ENCODE measurements at regions of chr17 and their contacts with region 1.

Region 1: GRCh38 chr17:37220607-37220953 is 155.2 kb upstream of the C17orf78 start:
- DNase-seq: no peak
- H3K4me3 ChIP-seq: no peak overlapping the region
- H3K27ac ChIP-seq: no peak overlapping the region
- H3K4me1 ChIP-seq: no peaks in the 10 kb centered on the region
- H3K27me3 ChIP-seq: no peaks in the 10 kb centered on the region
- CTCF ChIP-seq: peak in 2 of 4 experiments; percentile 24 to 49
- POLR2A ChIP-seq: no peak

Region 2: GRCh38 chr17:36629252-36629847 is 591.2 kb before region 1 on chr17:
- intact Hi-C with region 1: loop called (anchors 10 kb)
- DNase-seq: peak; percentile 62
- H3K4me3 ChIP-seq: no peak overlapping the region
- H3K27ac ChIP-seq: no peak overlapping the region
- H3K4me1 ChIP-seq: no peaks in the 10 kb centered on the region
- H3K27me3 ChIP-seq: no peaks in the 10 kb centered on the region
- CTCF ChIP-seq: peak; percentile 93 to 96 (median 94)
- POLR2A ChIP-seq: no peak